ENCODE measurements at regions of chr7 and their contacts with region 1.

Region 1: DNA sequence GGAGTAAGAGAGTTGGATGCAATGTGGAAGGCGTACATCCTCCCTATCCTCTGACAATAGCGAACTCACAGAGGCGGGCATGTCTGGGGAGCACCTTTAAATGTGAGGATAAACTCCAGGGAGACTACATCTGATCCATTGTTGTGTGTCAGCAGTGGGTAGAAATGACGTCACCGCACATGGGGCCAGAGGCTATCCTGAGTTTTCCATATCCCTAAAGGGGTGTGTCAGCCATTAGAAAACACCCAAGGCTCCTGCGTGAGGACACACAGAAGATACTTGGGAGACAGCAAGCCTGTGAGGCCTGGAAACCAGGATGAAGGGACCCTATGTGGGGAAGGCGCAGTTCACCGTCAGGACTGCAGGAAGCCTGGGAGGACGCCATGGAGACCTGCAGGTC is 17.2 kb upstream of the CDHR3 start:
- DNase-seq: no peak
- ATAC-seq: no peak
- H3K4me3 ChIP-seq: no peak overlapping the region
- H3K27ac ChIP-seq: no peak overlapping the region
- H3K4me1 ChIP-seq: no peaks in the 10 kb centered on the region
- H3K27me3 ChIP-seq: no peaks in the 10 kb centered on the region
- CTCF ChIP-seq: no peak
- POLR2A ChIP-seq: no peak

Region 2: GRCh38 chr7:105990726-105991453 is 45.0 kb after region 1 on chr7:
- intact Hi-C with region 1: loop called in 1 of 10 experiments (anchors 5 kb)
- DNase-seq: peak in 3 of 5 donors; percentile 24 to 43 (median 27)
- ATAC-seq: no peak
- H3K4me3 ChIP-seq: no peak overlapping the region
- H3K27ac ChIP-seq: no peak overlapping the region
- H3K4me1 ChIP-seq: peaks cover 0 to 10% (median 0%) of the 10 kb centered on the region in 12 donors
- H3K27me3 ChIP-seq: no peaks in the 10 kb centered on the region
- CTCF ChIP-seq: no peak
- POLR2A ChIP-seq: no peak

Measured in heart left ventricle (tissue), 16 donors.